Ascending aorta (tissue), 2 donors: ENCODE measurements at regions of chrX and their contacts with region 1.

Region 1: DNA sequence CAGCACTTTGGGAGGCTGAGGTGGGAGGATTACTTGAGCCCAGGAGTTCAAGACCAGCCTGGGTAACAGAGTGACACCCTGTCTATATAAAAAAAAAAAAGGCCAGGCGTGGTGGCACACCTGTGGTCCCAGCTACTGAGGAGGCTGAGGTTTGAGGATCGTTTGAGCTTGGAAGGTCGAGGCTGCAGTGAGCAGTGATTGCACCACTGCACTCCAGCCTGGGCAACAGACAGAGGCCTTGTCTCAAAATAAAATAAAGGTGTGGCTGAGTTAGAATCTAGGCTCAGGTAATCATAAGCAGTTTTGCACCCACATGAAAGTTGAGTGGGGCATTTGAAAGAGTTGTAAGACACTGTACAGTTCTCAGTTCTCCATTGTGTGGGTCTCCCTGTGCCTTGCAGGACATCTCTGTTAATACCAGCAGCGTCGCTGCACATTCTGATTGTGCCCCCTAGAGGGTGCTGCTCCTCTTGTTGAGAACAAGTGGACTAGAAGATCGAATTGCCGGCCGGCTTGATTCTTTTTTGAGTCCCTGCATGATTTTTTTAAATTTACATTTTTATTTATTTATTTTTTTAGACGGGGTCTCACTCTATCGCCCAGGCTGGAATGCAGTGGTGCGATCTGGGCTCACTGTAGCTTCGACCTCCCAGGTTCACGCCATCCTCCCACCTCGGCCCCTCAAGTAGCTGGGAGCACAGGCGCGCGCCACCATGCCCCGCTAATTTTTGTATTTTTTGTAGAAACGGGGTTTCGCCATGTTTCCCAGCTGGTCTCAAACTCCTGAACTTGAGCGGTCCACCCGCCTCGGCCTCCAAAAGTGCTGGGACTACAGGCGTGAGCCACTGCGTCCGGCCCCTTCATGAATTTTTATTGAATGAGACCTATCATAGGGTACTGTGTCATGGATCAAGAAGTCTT is 73.6 kb upstream of the RBMX start:
- DNase-seq: peak in 1 of 2 donors; percentile 75
- H3K4me3 ChIP-seq: no peak overlapping the region
- H3K27ac ChIP-seq: no peak overlapping the region
- H3K4me1 ChIP-seq: no peaks in the 10 kb centered on the region
- H3K27me3 ChIP-seq: no peaks in the 10 kb centered on the region
- CTCF ChIP-seq: peak in 2 of 3 experiments; percentile 49 to 53

Region 2: GRCh38 chrX:136999024-136999423 is 44.9 kb after region 1 on chrX:
- intact Hi-C with region 1: no loop called
- DNase-seq: no peak
- H3K4me3 ChIP-seq: no peak overlapping the region
- H3K27ac ChIP-seq: no peak overlapping the region
- H3K4me1 ChIP-seq: no peaks in the 10 kb centered on the region
- H3K27me3 ChIP-seq: no peaks in the 10 kb centered on the region
- CTCF ChIP-seq: no peak

Region 3: GRCh38 chrX:137051978-137052642 is 98.0 kb after region 1 on chrX:
- intact Hi-C with region 1: loop called (anchors 1 kb)
- DNase-seq: peak in 1 of 2 donors; percentile 72
- H3K4me3 ChIP-seq: peak overlapping the region; percentile 47 to 57
- H3K27ac ChIP-seq: no peak overlapping the region
- H3K4me1 ChIP-seq: no peaks in the 10 kb centered on the region
- H3K27me3 ChIP-seq: no peaks in the 10 kb centered on the region
- CTCF ChIP-seq: peak; percentile 47 to 76 (median 70)